ENCODE measurements at regions of chr17 and their contacts with region 1.

Region 1: GRCh38 chr17:12388226-12388625 is 277.5 kb upstream of the MYOCD start:
- DNase-seq: no peak
- H3K4me3 ChIP-seq: no peak overlapping the region
- H3K27ac ChIP-seq: no peak overlapping the region
- H3K4me1 ChIP-seq: no peaks in the 10 kb centered on the region
- H3K27me3 ChIP-seq: no peaks in the 10 kb centered on the region
- CTCF ChIP-seq: no peak
- POLR2A ChIP-seq: no peak

Region 2: GRCh38 chr17:12445331-12445730 is 57.1 kb after region 1 on chr17:
- intact Hi-C with region 1: loop called (anchors 10 kb)
- DNase-seq: no peak
- H3K4me3 ChIP-seq: no peak overlapping the region
- H3K27ac ChIP-seq: no peak overlapping the region
- H3K4me1 ChIP-seq: no peaks in the 10 kb centered on the region
- H3K27me3 ChIP-seq: no peaks in the 10 kb centered on the region
- CTCF ChIP-seq: no peak
- POLR2A ChIP-seq: no peak

Region 3: DNA sequence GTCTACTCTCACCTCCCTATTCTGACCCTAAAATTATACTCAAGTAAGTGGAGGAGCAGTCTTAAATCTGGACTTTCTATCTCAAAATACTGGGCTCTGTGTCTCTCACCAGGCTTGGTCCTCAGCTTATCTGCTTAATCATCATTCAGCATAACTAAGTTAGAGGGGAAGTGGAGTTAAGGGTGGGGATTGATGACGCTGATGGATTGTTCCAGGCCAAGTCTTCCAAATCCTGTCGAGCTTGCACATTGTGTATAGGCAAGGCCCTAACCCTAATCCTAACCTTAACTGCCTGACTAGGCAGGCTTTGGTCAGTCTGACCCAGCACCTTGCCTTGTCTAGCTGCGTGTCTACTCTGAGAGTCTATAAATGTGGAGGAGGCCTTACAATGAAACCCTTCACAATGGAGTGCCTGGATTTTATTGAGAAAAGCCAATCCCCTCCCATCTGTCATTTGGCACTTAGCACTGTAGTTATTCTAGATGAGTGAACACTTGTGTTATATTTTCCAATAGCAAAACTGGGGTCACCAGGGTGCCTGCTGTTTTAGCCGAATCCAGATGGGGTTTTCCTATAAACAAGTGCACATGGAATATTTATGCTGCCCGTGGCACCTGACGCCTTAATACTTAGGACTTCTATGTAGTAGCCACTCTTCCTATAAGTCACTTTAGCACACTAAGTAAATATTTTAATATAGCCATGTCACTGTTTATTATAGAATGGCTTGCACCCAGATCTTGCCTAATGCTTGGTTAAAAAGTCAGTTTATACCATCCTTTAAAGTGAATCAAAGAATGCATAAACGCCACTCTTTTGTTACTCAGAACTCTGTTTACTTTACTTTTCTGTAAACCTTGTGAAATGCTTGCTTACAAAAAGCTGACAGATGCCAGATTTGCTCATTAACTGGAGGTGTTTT is 84.3 kb after region 1 on chr17:
- intact Hi-C with region 1: no loop called
- DNase-seq: no peak
- H3K4me3 ChIP-seq: no peak overlapping the region
- H3K27ac ChIP-seq: no peak overlapping the region
- H3K4me1 ChIP-seq: no peaks in the 10 kb centered on the region
- H3K27me3 ChIP-seq: no peaks in the 10 kb centered on the region
- CTCF ChIP-seq: no peak
- POLR2A ChIP-seq: no peak